GM10248 (cell line): ENCODE measurements at regions of chr1 and their contacts with region 1.

Region 1: GRCh38 chr1:66758241-66758755 is 6.0 kb downstream of the DYNLT5 start:
- DNase-seq: peak; percentile 56
- CTCF ChIP-seq: no peak

Region 2: DNA sequence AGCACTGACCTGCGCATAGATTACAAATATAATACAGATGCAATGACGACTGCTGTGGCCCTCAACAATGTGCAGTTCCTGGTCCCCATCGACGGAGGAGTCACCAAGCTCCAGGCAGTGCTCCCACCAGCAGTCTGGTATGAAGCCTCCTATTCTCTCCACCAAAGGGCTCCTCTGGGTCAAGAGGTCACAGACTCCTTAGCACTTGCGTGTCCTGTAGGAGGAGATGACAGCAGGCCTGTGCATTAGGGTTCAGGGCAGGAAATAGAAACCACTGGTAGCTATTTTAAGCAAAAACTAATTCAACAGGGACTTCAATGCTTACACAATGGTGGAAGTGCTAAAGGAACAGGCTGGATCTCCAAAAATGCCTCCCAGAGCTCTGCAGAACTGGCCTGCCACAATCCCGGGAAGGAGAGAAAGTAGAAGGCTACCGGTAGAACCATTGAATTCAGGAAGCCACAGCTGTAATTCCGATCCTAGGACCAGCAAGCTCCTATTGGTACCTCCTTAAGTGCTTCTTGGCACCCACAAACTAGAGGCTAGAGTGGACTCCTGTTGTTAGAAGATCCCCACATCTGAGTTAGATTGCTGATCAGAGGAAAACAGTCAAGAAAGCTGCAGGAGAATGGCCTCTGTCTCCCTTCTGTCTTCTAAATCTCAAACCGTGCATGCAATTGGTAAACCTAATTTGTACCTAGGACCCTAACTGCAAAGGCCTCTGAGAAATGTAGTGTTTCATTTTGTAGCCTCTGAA is 18.7 kb before region 1 on chr1:
- CTCF ChIA-PET with region 1: interaction called, 13 read pairs
- POLR2A ChIA-PET with region 1: no interaction called
- DNase-seq: no peak
- CTCF ChIP-seq: no peak